Gastrocnemius medialis (tissue), 4 donors: ENCODE measurements at regions of chr11 and their contacts with region 1.

Region 1: DNA sequence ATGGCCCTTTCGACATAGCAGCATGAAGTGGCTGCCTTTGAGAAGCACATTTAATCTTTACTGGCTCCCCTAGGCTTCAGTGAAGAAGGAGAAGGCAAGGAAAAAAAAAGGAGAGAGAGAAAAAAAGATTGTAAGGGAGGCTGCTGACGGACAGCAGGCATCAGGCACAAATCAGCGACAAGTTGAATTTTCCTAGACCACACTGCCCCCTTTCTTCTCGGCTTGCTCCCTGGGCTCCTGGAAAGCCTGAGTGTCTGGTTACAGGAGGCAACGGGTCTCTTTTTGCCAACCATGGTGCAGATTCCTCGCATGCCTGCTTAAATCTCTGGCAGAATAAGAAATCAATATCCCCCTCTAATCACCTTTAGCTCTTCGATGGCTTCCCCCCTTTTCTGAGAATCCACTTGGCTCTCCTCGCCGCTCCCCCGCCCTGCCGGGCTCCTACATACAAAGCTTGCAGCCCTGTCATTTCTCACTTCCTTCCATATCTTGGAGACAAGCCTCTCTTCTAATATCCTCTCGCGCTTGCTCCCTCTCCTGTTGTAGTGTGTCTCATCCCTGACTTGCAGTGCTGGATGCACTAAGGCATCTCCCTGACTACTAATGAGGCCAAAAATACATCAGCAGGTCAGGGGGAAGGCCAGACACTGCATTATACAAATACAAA is 14.3 kb downstream of the BLID start:
- DNase-seq: peak; percentile 65 to 73
- ATAC-seq: peak; percentile 78 to 86
- H3K4me3 ChIP-seq: peak overlapping the region; percentile 59 to 65 (median 60)
- H3K27ac ChIP-seq: peak overlapping the region; percentile 86 to 92 (median 88)
- H3K4me1 ChIP-seq: peaks cover 6 to 9% of the 10 kb centered on the region in 2 donors
- H3K27me3 ChIP-seq: no peaks in the 10 kb centered on the region
- CTCF ChIP-seq: peak; percentile 46 to 76 (median 62)
- POLR2A ChIP-seq: peak; percentile 22 to 23

Region 2: GRCh38 chr11:121292495-121293287 is 809.1 kb before region 1 on chr11 and contains the start of gene SC5D:
- in situ Hi-C with region 1: no loop called
- intact Hi-C with region 1: loop called (anchors 10 kb)
- DNase-seq: peak; percentile 89 to 91
- ATAC-seq: peak; percentile 98 to 99
- H3K4me3 ChIP-seq: peak within 1 kb of the TSS; percentile 68 to 95 (median 88)
- H3K27ac ChIP-seq: peak within 1 kb of the TSS; percentile 77 to 86 (median 82)
- H3K4me1 ChIP-seq: peaks cover 10 to 11% of the 10 kb centered on the region in 2 donors
- H3K27me3 ChIP-seq: no peaks in the 10 kb centered on the region
- CTCF ChIP-seq: peak in 1 of 5 experiments; percentile 6
- POLR2A ChIP-seq: peak; percentile 73 to 90
- total RNA-seq, gene SC5D: 5.7 to 11.5 (median 6.5) TPM

Region 3: GRCh38 chr11:121870206-121871045 is 231.3 kb before region 1 on chr11:
- in situ Hi-C with region 1: no loop called
- intact Hi-C with region 1: loop called (anchors 5 kb)
- DNase-seq: peak in 1 of 2 donors; percentile 39
- ATAC-seq: peak; percentile 79 to 80
- H3K4me3 ChIP-seq: no peak overlapping the region
- H3K27ac ChIP-seq: peak overlapping the region; percentile 5 to 69 (median 49)
- H3K4me1 ChIP-seq: peaks cover 27 to 35% of the 10 kb centered on the region in 2 donors
- H3K27me3 ChIP-seq: no peaks in the 10 kb centered on the region
- CTCF ChIP-seq: no peak
- POLR2A ChIP-seq: no peak

Region 4: GRCh38 chr11:122159173-122159721 is 57.5 kb after region 1 on chr11:
- in situ Hi-C with region 1: no loop called
- intact Hi-C with region 1: loop called (anchors 2 kb)
- DNase-seq: peak in 1 of 2 donors; percentile 23
- ATAC-seq: no peak
- H3K4me3 ChIP-seq: peak overlapping the region; percentile 34 to 58 (median 46)
- H3K27ac ChIP-seq: peak overlapping the region; percentile 64 to 76 (median 68)
- H3K4me1 ChIP-seq: peaks cover 13 to 16% of the 10 kb centered on the region in 2 donors
- H3K27me3 ChIP-seq: no peaks in the 10 kb centered on the region
- CTCF ChIP-seq: no peak
- POLR2A ChIP-seq: no peak

Region 5: GRCh38 chr11:122209619-122210366 is 108.0 kb after region 1 on chr11:
- in situ Hi-C with region 1: loop called in 2 of 4 experiments (anchors 10 kb)
- intact Hi-C with region 1: loop called (anchors 2 kb)
- DNase-seq: peak; percentile 48 to 58
- ATAC-seq: peak; percentile 79 to 86
- H3K4me3 ChIP-seq: no peak overlapping the region
- H3K27ac ChIP-seq: peak overlapping the region in 3 of 4 donors; percentile 24 to 44 (median 32)
- H3K4me1 ChIP-seq: peaks cover 30 to 35% of the 10 kb centered on the region in 2 donors
- H3K27me3 ChIP-seq: no peaks in the 10 kb centered on the region
- CTCF ChIP-seq: no peak
- POLR2A ChIP-seq: no peak